ENCODE measurements at regions of chr9 and their contacts with region 1.

Region 1: DNA sequence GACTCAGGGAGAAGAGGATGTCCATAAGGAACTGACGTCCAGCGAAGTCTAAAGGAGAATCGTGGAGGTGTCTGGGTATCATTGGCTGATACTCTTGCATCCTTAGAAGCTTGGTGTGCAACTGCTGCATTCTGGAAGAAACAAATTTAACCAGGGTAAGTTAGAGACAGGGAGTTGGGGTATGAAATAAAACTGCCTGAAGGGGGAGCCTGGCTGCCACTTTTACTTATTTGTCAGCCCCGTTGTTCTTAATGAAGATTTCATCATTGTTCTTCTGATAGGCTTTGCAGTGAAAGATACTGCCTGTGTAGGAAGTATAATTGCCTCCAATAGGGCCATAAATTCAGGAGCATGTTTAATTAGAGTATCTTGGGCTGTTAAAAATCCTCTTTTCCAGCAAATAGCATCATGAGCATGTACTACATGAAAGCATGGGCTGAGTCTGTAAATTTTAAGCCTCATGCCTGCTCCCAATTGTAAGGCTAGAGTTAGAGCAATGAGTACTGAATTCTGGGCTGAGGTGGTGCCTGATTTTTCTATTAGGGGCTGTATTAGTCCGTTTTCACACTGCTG is 1264.5 kb upstream of the ACO1 start:
- DNase-seq: peak; percentile 12 to 69 (median 30)
- ATAC-seq: peak; percentile 74
- H3K4me3 ChIP-seq: no peak overlapping the region
- H3K4me3 Mint-ChIP-seq: no peak overlapping the region
- H3K27ac ChIP-seq: no peak overlapping the region
- H3K27ac Mint-ChIP-seq: no peak overlapping the region
- H3K4me1 ChIP-seq: no peaks in the 10 kb centered on the region
- H3K4me1 Mint-ChIP-seq: peaks cover 8% of the 10 kb centered on the region
- H3K27me3 ChIP-seq: no peaks in the 10 kb centered on the region
- H3K27me3 Mint-ChIP-seq: peaks cover 2% of the 10 kb centered on the region
- CTCF ChIP-seq: peak; percentile 66

Region 2: GRCh38 chr9:31174681-31175080 is 54.7 kb after region 1 on chr9:
- CTCF ChIA-PET with region 1: no interaction called
- POLR2A ChIA-PET with region 1: no interaction called
- intact Hi-C with region 1: loop called in 1 of 2 experiments (anchors 10 kb)
- DNase-seq: no peak
- ATAC-seq: no peak
- H3K4me3 ChIP-seq: no peak overlapping the region
- H3K4me3 Mint-ChIP-seq: no peak overlapping the region
- H3K27ac ChIP-seq: no peak overlapping the region
- H3K27ac Mint-ChIP-seq: no peak overlapping the region
- H3K4me1 ChIP-seq: no peaks in the 10 kb centered on the region
- H3K4me1 Mint-ChIP-seq: no peaks in the 10 kb centered on the region
- H3K27me3 ChIP-seq: no peaks in the 10 kb centered on the region
- H3K27me3 Mint-ChIP-seq: no peaks in the 10 kb centered on the region
- CTCF ChIP-seq: no peak

Region 3: GRCh38 chr9:31418419-31418818 is 298.5 kb after region 1 on chr9:
- CTCF ChIA-PET with region 1: no interaction called
- POLR2A ChIA-PET with region 1: no interaction called
- intact Hi-C with region 1: no loop called
- DNase-seq: no peak
- ATAC-seq: no peak
- H3K4me3 ChIP-seq: no peak overlapping the region
- H3K4me3 Mint-ChIP-seq: no peak overlapping the region
- H3K27ac ChIP-seq: no peak overlapping the region
- H3K27ac Mint-ChIP-seq: no peak overlapping the region
- H3K4me1 ChIP-seq: no peaks in the 10 kb centered on the region
- H3K4me1 Mint-ChIP-seq: peaks cover 4% of the 10 kb centered on the region
- H3K27me3 ChIP-seq: no peaks in the 10 kb centered on the region
- H3K27me3 Mint-ChIP-seq: no peaks in the 10 kb centered on the region
- CTCF ChIP-seq: no peak

Region 4: GRCh38 chr9:31492239-31492638 is 372.3 kb after region 1 on chr9:
- CTCF ChIA-PET with region 1: no interaction called
- POLR2A ChIA-PET with region 1: no interaction called
- intact Hi-C with region 1: loop called in 1 of 2 experiments (anchors 5 kb)
- DNase-seq: no peak
- ATAC-seq: no peak
- H3K4me3 ChIP-seq: no peak overlapping the region
- H3K4me3 Mint-ChIP-seq: no peak overlapping the region
- H3K27ac ChIP-seq: no peak overlapping the region
- H3K27ac Mint-ChIP-seq: no peak overlapping the region
- H3K4me1 ChIP-seq: no peaks in the 10 kb centered on the region
- H3K4me1 Mint-ChIP-seq: peaks cover 2% of the 10 kb centered on the region
- H3K27me3 ChIP-seq: no peaks in the 10 kb centered on the region
- H3K27me3 Mint-ChIP-seq: no peaks in the 10 kb centered on the region
- CTCF ChIP-seq: no peak

Region 5: DNA sequence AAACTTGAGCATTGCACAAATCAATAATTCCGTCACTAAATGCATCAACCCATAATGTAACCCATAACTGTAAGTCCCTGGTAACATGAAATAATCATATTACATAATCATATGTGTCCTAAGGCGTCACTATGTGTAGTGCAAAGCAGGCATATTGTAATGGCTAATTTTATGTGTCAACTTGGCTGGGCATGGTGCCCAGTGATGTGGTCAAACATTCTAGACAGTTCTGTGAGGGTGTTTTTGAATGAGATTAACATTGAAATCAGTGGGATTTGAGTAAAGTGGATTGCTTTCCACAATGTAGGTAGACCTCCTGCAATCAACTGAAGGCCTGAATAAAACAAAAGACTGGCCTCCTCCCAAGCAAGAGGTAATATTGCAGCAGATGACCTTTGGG is 470.1 kb after region 1 on chr9:
- CTCF ChIA-PET with region 1: interaction called, 3 read pairs
- POLR2A ChIA-PET with region 1: no interaction called
- intact Hi-C with region 1: loop called in 1 of 2 experiments (anchors 5 kb)
- DNase-seq: no peak
- ATAC-seq: no peak
- H3K4me3 ChIP-seq: no peak overlapping the region
- H3K4me3 Mint-ChIP-seq: no peak overlapping the region
- H3K27ac ChIP-seq: no peak overlapping the region
- H3K27ac Mint-ChIP-seq: no peak overlapping the region
- H3K4me1 ChIP-seq: no peaks in the 10 kb centered on the region
- H3K4me1 Mint-ChIP-seq: no peaks in the 10 kb centered on the region
- H3K27me3 ChIP-seq: no peaks in the 10 kb centered on the region
- H3K27me3 Mint-ChIP-seq: no peaks in the 10 kb centered on the region
- CTCF ChIP-seq: no peak

Region 6: GRCh38 chr9:31996322-31996721 is 876.4 kb after region 1 on chr9:
- CTCF ChIA-PET with region 1: no interaction called
- POLR2A ChIA-PET with region 1: no interaction called
- intact Hi-C with region 1: loop called in 1 of 2 experiments (anchors 10 kb)
- DNase-seq: peak in 2 of 9 experiments; percentile 10 to 14
- ATAC-seq: no peak
- H3K4me3 ChIP-seq: no peak overlapping the region
- H3K4me3 Mint-ChIP-seq: no peak overlapping the region
- H3K27ac ChIP-seq: no peak overlapping the region
- H3K27ac Mint-ChIP-seq: no peak overlapping the region
- H3K4me1 ChIP-seq: no peaks in the 10 kb centered on the region
- H3K4me1 Mint-ChIP-seq: no peaks in the 10 kb centered on the region
- H3K27me3 ChIP-seq: no peaks in the 10 kb centered on the region
- H3K27me3 Mint-ChIP-seq: no peaks in the 10 kb centered on the region
- CTCF ChIP-seq: no peak

Region 7: GRCh38 chr9:32253731-32254130 is 1133.8 kb after region 1 on chr9:
- CTCF ChIA-PET with region 1: no interaction called
- POLR2A ChIA-PET with region 1: no interaction called
- intact Hi-C with region 1: loop called in 1 of 2 experiments (anchors 2 kb)
- DNase-seq: no peak
- ATAC-seq: no peak
- H3K4me3 ChIP-seq: no peak overlapping the region
- H3K4me3 Mint-ChIP-seq: no peak overlapping the region
- H3K27ac ChIP-seq: no peak overlapping the region
- H3K27ac Mint-ChIP-seq: no peak overlapping the region
- H3K4me1 ChIP-seq: no peaks in the 10 kb centered on the region
- H3K4me1 Mint-ChIP-seq: no peaks in the 10 kb centered on the region
- H3K27me3 ChIP-seq: no peaks in the 10 kb centered on the region
- H3K27me3 Mint-ChIP-seq: peaks cover 6% of the 10 kb centered on the region
- CTCF ChIP-seq: no peak

Measured in CD8-positive, alpha-beta T cell (primary cell).